ENCODE measurements at regions of chr10 and their contacts with region 1.

Region 1: DNA sequence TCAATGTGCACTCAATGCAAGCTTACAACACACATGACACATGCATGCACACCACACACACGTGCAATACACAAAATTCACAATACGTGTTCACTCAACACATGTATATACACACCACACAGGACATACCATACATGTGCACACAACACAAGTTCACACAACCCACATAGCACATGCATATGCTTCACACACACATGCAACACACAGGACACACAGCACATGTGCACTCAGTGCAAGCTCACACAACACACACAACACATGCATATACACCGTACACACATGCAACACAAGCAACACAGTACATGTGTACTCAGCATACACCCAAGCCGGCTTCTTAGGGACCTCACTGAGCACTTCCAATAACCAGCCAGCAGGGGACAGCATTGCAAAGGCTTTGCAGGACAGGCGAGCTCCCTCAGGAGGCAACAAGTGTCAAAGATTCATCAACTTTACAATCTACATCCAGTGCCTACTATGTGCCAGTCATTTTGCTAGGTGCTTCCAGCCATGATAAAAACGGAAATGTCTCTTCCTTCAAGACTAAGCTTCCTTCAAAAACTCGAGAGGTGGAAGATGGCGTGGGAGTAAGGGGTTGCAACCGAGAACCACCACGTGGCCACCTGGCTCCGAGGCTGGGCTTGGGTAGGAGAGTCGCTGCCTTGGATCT is 61.1 kb downstream of the JCAD start:
- DNase-seq: peak; percentile 86
- ATAC-seq: peak; percentile 82
- H3K4me3 Mint-ChIP-seq: no peak overlapping the region
- H3K27ac Mint-ChIP-seq: no peak overlapping the region
- H3K4me1 Mint-ChIP-seq: peaks cover 9% of the 10 kb centered on the region
- H3K27me3 Mint-ChIP-seq: peaks cover 33% of the 10 kb centered on the region

Region 2: GRCh38 chr10:29559996-29560395 is 438.3 kb before region 1 on chr10:
- CTCF ChIA-PET with region 1: no interaction called
- POLR2A ChIA-PET with region 1: no interaction called
- intact Hi-C with region 1: no loop called
- DNase-seq: no peak
- ATAC-seq: no peak
- H3K4me3 Mint-ChIP-seq: no peak overlapping the region
- H3K27ac Mint-ChIP-seq: no peak overlapping the region
- H3K4me1 Mint-ChIP-seq: no peaks in the 10 kb centered on the region
- H3K27me3 Mint-ChIP-seq: no peaks in the 10 kb centered on the region

Region 3: DNA sequence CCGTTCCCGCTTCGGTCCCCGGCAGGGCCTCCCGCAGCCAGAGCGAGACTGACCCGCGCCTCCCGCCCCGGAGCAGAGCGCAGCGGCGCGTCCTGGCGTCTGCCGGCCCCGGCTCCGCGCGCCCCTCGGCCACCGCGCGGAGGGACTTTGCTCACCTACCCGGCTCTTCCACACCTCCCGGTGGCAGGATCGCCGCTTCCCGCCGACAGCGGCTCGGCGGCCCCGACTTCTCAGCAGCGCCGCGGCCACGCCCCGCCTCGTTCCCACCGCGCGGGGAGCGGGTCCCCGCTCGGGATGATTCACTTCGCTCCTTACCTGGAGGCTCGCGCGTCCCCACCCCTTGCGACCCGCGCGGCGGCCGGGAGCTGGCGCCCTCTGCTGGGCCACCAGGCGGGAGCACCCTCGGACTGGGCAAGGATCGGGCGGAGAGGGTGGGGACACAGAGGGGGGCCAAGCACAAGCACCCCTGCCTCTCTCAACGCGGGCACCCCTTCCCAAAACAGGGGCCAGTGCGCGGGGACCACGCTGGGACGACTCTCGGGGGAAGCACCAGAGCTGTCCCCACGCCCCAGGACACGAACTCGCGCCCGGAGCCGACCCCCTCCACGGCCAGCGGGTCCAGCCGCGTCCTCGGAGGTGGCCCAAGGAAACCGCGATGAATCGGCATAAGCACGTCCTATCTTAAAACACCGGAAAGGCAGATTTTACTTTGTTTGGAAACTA is 262.5 kb before region 1 on chr10:
- CTCF ChIA-PET with region 1: no interaction called
- POLR2A ChIA-PET with region 1: no interaction called
- intact Hi-C with region 1: no loop called
- DNase-seq: peak; percentile 92
- ATAC-seq: peak; percentile 86
- H3K4me3 Mint-ChIP-seq: peak overlapping the region; percentile 74
- H3K27ac Mint-ChIP-seq: no peak overlapping the region
- H3K4me1 Mint-ChIP-seq: peaks cover 33% of the 10 kb centered on the region
- H3K27me3 Mint-ChIP-seq: peaks cover 6% of the 10 kb centered on the region

Region 4: DNA sequence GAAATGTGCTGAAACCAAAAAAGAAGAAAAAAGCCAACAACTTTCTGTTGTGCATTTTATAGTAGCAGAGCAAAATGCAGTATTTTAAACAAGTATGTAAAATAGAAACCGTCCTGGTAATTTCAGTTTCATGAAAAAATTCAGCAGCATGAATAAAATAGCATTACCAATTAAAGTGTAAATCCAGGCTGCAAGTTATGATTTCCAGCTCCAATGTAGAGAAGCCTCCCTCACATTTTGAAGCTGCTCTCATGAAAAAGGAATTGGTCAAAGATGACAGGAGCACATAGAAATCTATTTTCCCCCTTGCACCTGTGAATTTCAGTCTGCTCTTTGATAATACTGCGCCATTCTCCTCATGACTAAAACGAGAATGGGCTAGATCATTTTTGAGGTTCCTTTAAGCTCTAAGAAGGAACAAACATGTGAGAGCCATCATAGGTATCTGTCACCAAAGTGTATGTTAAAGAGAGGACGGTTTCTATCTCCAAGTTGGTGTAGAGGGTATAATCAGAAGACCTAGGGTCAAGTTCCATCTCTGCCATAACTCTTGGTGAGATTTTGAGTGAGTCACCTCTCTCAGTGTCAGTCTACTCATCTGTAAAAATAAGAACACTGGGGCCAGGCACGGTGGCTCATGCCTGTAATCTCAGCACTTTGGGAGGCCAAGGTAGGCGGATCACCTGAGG is 243.3 kb after region 1 on chr10:
- CTCF ChIA-PET with region 1: interaction called, 9 read pairs
- POLR2A ChIA-PET with region 1: no interaction called
- intact Hi-C with region 1: loop called (anchors 1 kb)
- DNase-seq: no peak
- ATAC-seq: no peak
- H3K4me3 Mint-ChIP-seq: no peak overlapping the region
- H3K27ac Mint-ChIP-seq: no peak overlapping the region
- H3K4me1 Mint-ChIP-seq: no peaks in the 10 kb centered on the region
- H3K27me3 Mint-ChIP-seq: no peaks in the 10 kb centered on the region

Region 5: DNA sequence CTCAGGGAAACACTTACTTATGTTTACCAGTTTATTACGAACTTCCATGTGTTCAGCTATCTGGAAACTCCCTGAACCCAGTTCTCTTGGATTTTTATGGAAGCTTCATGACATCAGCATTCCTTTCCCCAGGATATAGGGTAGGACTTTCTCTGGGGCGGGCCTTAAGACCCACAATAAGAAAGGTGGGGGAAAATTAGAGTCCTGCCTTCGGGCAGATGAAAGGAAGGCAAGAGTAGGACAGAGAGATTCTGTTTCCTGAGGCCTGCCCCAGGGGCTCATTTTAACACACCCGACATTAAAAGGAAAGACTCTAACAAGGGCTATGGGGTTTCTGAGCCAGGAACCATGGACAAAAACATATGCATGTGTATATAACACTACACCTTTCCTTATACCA is 521.4 kb after region 1 on chr10:
- CTCF ChIA-PET with region 1: no interaction called
- POLR2A ChIA-PET with region 1: no interaction called
- intact Hi-C with region 1: no loop called
- DNase-seq: no peak
- ATAC-seq: no peak
- H3K4me3 Mint-ChIP-seq: no peak overlapping the region
- H3K27ac Mint-ChIP-seq: no peak overlapping the region
- H3K4me1 Mint-ChIP-seq: peaks cover 5% of the 10 kb centered on the region
- H3K27me3 Mint-ChIP-seq: no peaks in the 10 kb centered on the region

Measured in activated CD4-positive, alpha-beta T cell treated with anti-CD3 and anti-CD28 coated beads for 36 hours (primary cell).